B cell (primary cell): ENCODE measurements at regions of chr14 and their contacts with region 1.

Region 1: DNA sequence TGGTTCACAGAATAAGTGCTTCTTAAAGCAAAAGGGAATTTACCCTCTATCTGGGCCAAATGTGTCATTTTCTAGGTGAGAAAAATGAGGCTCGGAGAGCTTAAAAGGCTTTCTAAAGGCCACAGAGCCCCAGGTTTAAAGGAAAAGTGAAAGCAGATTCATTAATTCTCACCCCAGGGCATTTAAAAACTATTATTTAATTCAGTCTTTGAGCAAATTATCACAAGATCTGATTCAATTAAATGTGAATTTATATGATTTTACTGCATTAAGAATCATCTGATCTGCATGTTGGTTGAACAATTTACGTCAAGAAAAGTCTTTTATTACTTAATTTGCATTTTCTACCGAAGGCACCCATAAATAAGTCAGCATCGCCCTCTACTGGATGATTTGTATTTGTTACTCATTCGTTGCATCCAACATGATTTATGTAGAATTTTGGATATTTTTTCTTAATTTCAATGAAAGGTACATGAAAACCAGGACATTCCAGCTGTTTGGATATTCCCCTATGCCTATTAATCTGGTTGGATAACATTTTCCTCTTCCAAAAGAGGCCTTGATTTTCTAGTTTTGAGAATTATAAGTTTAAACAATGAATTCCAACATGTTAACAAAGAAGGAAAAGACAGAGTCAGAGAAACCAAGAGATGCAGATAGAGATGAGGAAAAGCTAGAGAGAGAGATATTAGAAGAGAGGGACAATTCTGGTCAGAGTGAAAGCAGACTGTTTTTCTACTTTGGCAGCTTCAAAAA is 19.1 kb upstream of the DHRS7 start:
- DNase-seq: peak; percentile 85
- ATAC-seq: peak; percentile 69
- H3K4me3 ChIP-seq: peak overlapping the region; percentile 34 to 83 (median 59)
- H3K4me3 Mint-ChIP-seq: peak overlapping the region; percentile 78
- H3K27ac ChIP-seq: peak overlapping the region; percentile 69 to 81
- H3K27ac Mint-ChIP-seq: peak overlapping the region; percentile 60
- H3K4me1 ChIP-seq: peaks cover 9 to 12% of the 10 kb centered on the region in 2 donors
- H3K4me1 Mint-ChIP-seq: peaks cover 16% of the 10 kb centered on the region
- H3K27me3 ChIP-seq: no peaks in the 10 kb centered on the region
- H3K27me3 Mint-ChIP-seq: no peaks in the 10 kb centered on the region
- CTCF ChIP-seq: peak; percentile 98

Region 2: DNA sequence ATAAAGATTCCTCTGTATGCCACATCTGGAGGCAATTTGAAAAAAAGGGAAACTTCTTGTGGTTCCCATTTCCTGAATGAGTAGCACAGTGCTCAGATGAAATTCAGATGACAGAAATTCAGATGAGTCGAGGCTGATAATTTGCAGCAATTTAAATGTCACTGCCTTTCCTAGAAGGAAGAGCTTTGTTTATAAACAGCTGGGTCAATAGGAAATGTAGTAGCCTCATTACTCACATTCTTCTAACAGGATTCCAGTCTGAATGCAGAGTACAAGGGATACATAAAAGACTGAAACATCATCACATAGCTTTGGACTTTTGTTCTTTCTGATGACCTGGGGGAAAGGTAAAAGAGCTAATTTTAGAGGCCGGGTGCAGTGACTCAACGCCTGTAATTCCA is 1557.9 kb before region 1 on chr14:
- CTCF ChIA-PET with region 1: no interaction called
- POLR2A ChIA-PET with region 1: no interaction called
- intact Hi-C with region 1: no loop called
- DNase-seq: no peak
- ATAC-seq: no peak
- H3K4me3 ChIP-seq: no peak overlapping the region
- H3K4me3 Mint-ChIP-seq: no peak overlapping the region
- H3K27ac ChIP-seq: no peak overlapping the region
- H3K27ac Mint-ChIP-seq: no peak overlapping the region
- H3K4me1 ChIP-seq: no peaks in the 10 kb centered on the region
- H3K4me1 Mint-ChIP-seq: no peaks in the 10 kb centered on the region
- H3K27me3 ChIP-seq: no peaks in the 10 kb centered on the region
- H3K27me3 Mint-ChIP-seq: peaks cover 4% of the 10 kb centered on the region
- CTCF ChIP-seq: no peak

Region 3: DNA sequence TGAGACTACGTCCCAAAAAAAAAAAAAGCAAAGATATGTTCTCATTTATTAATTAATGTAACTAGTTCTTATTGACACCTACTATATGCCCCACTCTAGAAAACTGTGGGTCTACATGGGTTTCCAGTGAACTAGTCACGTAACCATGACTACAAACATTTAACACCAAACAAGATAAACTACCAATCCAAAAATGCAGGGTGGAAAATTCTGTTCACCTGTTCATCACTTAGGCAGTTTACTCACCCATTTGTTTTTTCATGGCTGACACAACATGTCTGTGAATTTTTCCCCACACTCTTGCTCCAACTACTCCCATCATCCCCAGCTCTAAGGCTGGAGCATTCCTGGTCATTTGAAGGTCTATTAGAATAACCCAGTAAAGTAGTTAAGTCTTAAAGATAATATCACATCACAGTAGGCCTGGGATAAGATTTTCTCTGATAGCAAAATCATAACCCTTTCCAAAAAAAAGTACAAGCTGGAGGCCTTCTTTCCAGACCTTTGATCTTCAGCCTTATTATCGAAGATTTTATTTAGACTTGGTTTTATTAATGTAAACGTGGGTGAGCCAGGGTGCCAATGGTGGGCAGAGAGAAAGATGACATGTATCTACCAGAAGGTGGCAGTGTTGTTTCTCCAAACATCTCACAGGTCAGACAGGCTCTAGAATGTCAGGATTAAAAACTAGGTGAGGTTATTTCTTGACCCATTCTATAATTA is 1057.5 kb before region 1 on chr14:
- CTCF ChIA-PET with region 1: interaction called, 4 read pairs
- POLR2A ChIA-PET with region 1: no interaction called
- intact Hi-C with region 1: loop called (anchors 1 kb)
- DNase-seq: peak; percentile 73
- ATAC-seq: peak; percentile 80
- H3K4me3 ChIP-seq: no peak overlapping the region
- H3K4me3 Mint-ChIP-seq: no peak overlapping the region
- H3K27ac ChIP-seq: no peak overlapping the region
- H3K27ac Mint-ChIP-seq: no peak overlapping the region
- H3K4me1 ChIP-seq: no peaks in the 10 kb centered on the region
- H3K4me1 Mint-ChIP-seq: peaks cover 3% of the 10 kb centered on the region
- H3K27me3 ChIP-seq: peaks cover 0 to 4% (median 1%) of the 10 kb centered on the region in 4 experiments
- H3K27me3 Mint-ChIP-seq: peaks cover 8% of the 10 kb centered on the region
- CTCF ChIP-seq: peak; percentile 94

Region 4: GRCh38 chr14:59262717-59263454 is 921.4 kb before region 1 on chr14:
- CTCF ChIA-PET with region 1: no interaction called
- POLR2A ChIA-PET with region 1: no interaction called
- intact Hi-C with region 1: no loop called
- DNase-seq: no peak
- ATAC-seq: no peak
- H3K4me3 ChIP-seq: no peak overlapping the region
- H3K4me3 Mint-ChIP-seq: no peak overlapping the region
- H3K27ac ChIP-seq: no peak overlapping the region
- H3K27ac Mint-ChIP-seq: no peak overlapping the region
- H3K4me1 ChIP-seq: no peaks in the 10 kb centered on the region
- H3K4me1 Mint-ChIP-seq: peaks cover 7% of the 10 kb centered on the region
- H3K27me3 ChIP-seq: no peaks in the 10 kb centered on the region
- H3K27me3 Mint-ChIP-seq: no peaks in the 10 kb centered on the region
- CTCF ChIP-seq: no peak

Region 5: DNA sequence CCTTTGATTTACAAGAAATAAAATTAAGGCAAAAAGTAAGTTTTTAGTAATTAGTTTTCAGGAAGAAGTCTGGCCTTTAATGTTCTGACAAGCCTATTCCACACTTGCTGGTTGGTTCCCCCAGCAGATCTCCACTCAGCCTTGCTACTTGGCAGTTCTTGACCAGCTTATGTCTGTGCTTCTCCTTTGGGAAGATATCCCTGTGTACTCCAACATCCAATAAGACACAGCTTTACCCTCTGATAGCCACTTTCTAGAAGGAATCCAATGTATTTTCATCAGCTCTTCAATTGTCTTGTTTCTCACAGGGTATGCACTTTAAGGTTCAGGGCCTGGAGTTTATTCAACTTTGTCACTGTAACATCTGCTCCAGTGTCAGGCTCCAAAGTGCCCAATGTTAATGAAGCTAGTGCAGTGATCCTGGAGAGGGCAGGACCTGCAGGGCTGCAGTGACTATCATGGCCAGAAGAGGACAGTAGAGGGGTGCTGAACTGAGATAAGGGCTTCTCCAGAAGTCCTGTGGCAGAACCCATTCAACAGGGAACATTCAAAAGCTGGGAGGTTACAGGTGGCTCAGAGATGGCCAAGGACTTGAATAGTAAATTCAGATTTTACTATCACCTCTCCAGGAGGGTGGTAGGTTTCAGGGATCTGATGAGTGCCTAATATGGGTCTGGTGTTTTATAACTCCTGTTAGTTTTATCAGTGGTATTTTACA is 677.1 kb before region 1 on chr14:
- CTCF ChIA-PET with region 1: interaction called, 12 read pairs
- POLR2A ChIA-PET with region 1: no interaction called
- intact Hi-C with region 1: loop called (anchors 5 kb)
- DNase-seq: peak; percentile 48
- ATAC-seq: peak; percentile 61
- H3K4me3 ChIP-seq: no peak overlapping the region
- H3K4me3 Mint-ChIP-seq: no peak overlapping the region
- H3K27ac ChIP-seq: no peak overlapping the region
- H3K27ac Mint-ChIP-seq: no peak overlapping the region
- H3K4me1 ChIP-seq: no peaks in the 10 kb centered on the region
- H3K4me1 Mint-ChIP-seq: no peaks in the 10 kb centered on the region
- H3K27me3 ChIP-seq: peaks cover 0 to 2% (median 0%) of the 10 kb centered on the region in 4 experiments
- H3K27me3 Mint-ChIP-seq: no peaks in the 10 kb centered on the region
- CTCF ChIP-seq: peak; percentile 74

Region 6: GRCh38 chr14:59632381-59632780 is 551.9 kb before region 1 on chr14:
- CTCF ChIA-PET with region 1: interaction called, 11 read pairs
- POLR2A ChIA-PET with region 1: no interaction called
- intact Hi-C with region 1: no loop called
- DNase-seq: no peak
- ATAC-seq: no peak
- H3K4me3 ChIP-seq: no peak overlapping the region
- H3K4me3 Mint-ChIP-seq: no peak overlapping the region
- H3K27ac ChIP-seq: no peak overlapping the region
- H3K27ac Mint-ChIP-seq: no peak overlapping the region
- H3K4me1 ChIP-seq: no peaks in the 10 kb centered on the region
- H3K4me1 Mint-ChIP-seq: peaks cover 3% of the 10 kb centered on the region
- H3K27me3 ChIP-seq: peaks cover 0 to 22% (median 17%) of the 10 kb centered on the region in 4 experiments
- H3K27me3 Mint-ChIP-seq: peaks cover 51% of the 10 kb centered on the region
- CTCF ChIP-seq: no peak

Region 7: GRCh38 chr14:60064491-60065072 is 119.7 kb before region 1 on chr14:
- CTCF ChIA-PET with region 1: interaction called, 183 read pairs
- POLR2A ChIA-PET with region 1: interaction called, 4 read pairs
- intact Hi-C with region 1: loop called (anchors 1 kb)
- DNase-seq: peak; percentile 56
- ATAC-seq: peak; percentile 57
- H3K4me3 ChIP-seq: no peak overlapping the region
- H3K4me3 Mint-ChIP-seq: no peak overlapping the region
- H3K27ac ChIP-seq: no peak overlapping the region
- H3K27ac Mint-ChIP-seq: no peak overlapping the region
- H3K4me1 ChIP-seq: no peaks in the 10 kb centered on the region
- H3K4me1 Mint-ChIP-seq: no peaks in the 10 kb centered on the region
- H3K27me3 ChIP-seq: no peaks in the 10 kb centered on the region
- H3K27me3 Mint-ChIP-seq: peaks cover 6% of the 10 kb centered on the region
- CTCF ChIP-seq: peak; percentile 75

Region 8: GRCh38 chr14:60164712-60165546 is 19.4 kb before region 1 on chr14 and contains the start of gene DHRS7:
- CTCF ChIA-PET with region 1: interaction called, 82 read pairs
- POLR2A ChIA-PET with region 1: interaction called, 4 read pairs
- intact Hi-C with region 1: loop called (anchors 1 kb)
- DNase-seq: peak; percentile 84
- ATAC-seq: peak; percentile 91
- H3K4me3 ChIP-seq: peak within 1 kb of the TSS; percentile 81 to 93 (median 87)
- H3K4me3 Mint-ChIP-seq: peak within 1 kb of the TSS; percentile 95
- H3K27ac ChIP-seq: peak within 1 kb of the TSS; percentile 87 to 93
- H3K27ac Mint-ChIP-seq: peak within 1 kb of the TSS; percentile 99
- H3K4me1 ChIP-seq: peaks cover 20 to 21% of the 10 kb centered on the region in 2 donors
- H3K4me1 Mint-ChIP-seq: peaks cover 43% of the 10 kb centered on the region
- H3K27me3 ChIP-seq: no peaks in the 10 kb centered on the region
- H3K27me3 Mint-ChIP-seq: no peaks in the 10 kb centered on the region
- CTCF ChIP-seq: peak; percentile 11
- total RNA-seq, gene DHRS7: 44.7 and 47.5 TPM in 2 replicates

Region 9: DNA sequence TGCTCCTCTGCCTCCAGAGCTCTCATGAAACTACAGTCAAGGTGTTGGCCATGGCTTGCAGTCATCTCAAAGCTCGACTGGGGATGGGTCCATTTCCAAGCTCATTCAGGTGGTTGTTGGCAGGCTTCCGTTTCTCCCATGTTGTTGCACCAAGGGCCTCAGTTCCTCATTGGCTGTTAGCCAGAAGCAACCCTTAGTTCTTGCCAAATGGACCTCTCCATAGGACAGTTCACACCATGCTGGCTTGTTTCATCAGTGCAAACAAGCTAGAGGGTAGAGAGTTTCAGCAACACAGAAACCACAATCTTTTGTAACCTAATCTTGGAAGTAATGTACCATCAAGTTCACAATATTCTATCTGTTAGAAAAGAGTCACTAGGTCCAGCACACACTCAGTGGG is 42.0 kb after region 1 on chr14:
- CTCF ChIA-PET with region 1: no interaction called
- POLR2A ChIA-PET with region 1: no interaction called
- intact Hi-C with region 1: no loop called
- DNase-seq: no peak
- ATAC-seq: no peak
- H3K4me3 ChIP-seq: no peak overlapping the region
- H3K4me3 Mint-ChIP-seq: no peak overlapping the region
- H3K27ac ChIP-seq: no peak overlapping the region
- H3K27ac Mint-ChIP-seq: no peak overlapping the region
- H3K4me1 ChIP-seq: no peaks in the 10 kb centered on the region
- H3K4me1 Mint-ChIP-seq: no peaks in the 10 kb centered on the region
- H3K27me3 ChIP-seq: no peaks in the 10 kb centered on the region
- H3K27me3 Mint-ChIP-seq: no peaks in the 10 kb centered on the region
- CTCF ChIP-seq: no peak

Region 10: GRCh38 chr14:60331201-60332045 is 147.1 kb after region 1 on chr14:
- CTCF ChIA-PET with region 1: interaction called, 6 read pairs
- POLR2A ChIA-PET with region 1: no interaction called
- intact Hi-C with region 1: loop called (anchors 10 kb)
- DNase-seq: peak; percentile 85
- ATAC-seq: peak; percentile 66
- H3K4me3 ChIP-seq: peak overlapping the region; percentile 49 to 87 (median 73)
- H3K4me3 Mint-ChIP-seq: peak overlapping the region; percentile 90
- H3K27ac ChIP-seq: peak overlapping the region; percentile 63 to 68
- H3K27ac Mint-ChIP-seq: peak overlapping the region; percentile 71
- H3K4me1 ChIP-seq: peaks cover 16 to 20% of the 10 kb centered on the region in 2 donors
- H3K4me1 Mint-ChIP-seq: peaks cover 26% of the 10 kb centered on the region
- H3K27me3 ChIP-seq: peaks cover 0 to 17% (median 4%) of the 10 kb centered on the region in 4 experiments
- H3K27me3 Mint-ChIP-seq: peaks cover 23% of the 10 kb centered on the region
- CTCF ChIP-seq: peak; percentile 98